GM10248 (cell line): ENCODE measurements at regions of chr16 and their contacts with region 1.

Region 1: GRCh38 chr16:18846416-18846815 is 45.1 kb upstream of the ARL6IP1 start:
- DNase-seq: no peak
- CTCF ChIP-seq: no peak

Region 2: DNA sequence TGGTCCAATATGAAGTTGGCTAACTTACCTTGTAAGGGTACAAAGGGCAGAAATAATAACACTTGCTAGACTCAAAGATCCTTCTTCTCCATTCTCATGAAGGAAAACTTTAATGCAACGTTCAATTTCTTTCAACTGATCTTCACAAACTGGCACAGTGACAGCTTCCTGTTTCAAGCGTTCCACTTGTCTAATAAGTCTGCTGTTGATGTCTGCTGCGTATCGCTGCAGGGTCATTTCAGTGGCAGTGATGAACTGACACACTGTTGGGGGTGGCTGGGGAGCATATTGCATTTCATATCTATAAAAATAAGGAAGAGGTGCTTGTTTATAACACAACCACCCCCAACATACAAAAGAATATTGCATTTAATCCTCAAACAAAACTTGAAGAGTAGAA is 11.6 kb before region 1 on chr16:
- CTCF ChIA-PET with region 1: interaction called, 18 read pairs
- POLR2A ChIA-PET with region 1: no interaction called
- DNase-seq: no peak
- CTCF ChIP-seq: no peak